ENCODE measurements at regions of chr12 and their contacts with region 1.

Region 1: GRCh38 chr12:54958048-54958658 is 26.4 kb downstream of the TESPA1 start:
- DNase-seq: no peak

Region 2: GRCh38 chr12:54701940-54702592 is 256.1 kb before region 1 on chr12:
- intact Hi-C with region 1: loop called (anchors 2 kb)
- DNase-seq: no peak

Region 3: GRCh38 chr12:54749191-54749818 is 208.8 kb before region 1 on chr12:
- intact Hi-C with region 1: loop called (anchors 1 kb)
- DNase-seq: no peak

Region 4: GRCh38 chr12:55019779-55020178 is 61.6 kb after region 1 on chr12 and contains the start of gene NEUROD4:
- intact Hi-C with region 1: no loop called
- DNase-seq: no peak
- total RNA-seq, gene NEUROD4: not detected